ENCODE measurements at regions of chr14 and their contacts with region 1.

Region 1: GRCh38 chr14:37874429-37875191 is 279.2 kb downstream of the TTC6 start:
- DNase-seq: peak; percentile 90
- ATAC-seq: peak; percentile 97
- H3K4me3 ChIP-seq: peak overlapping the region in 1 of 3 experiments; percentile 49; a peak in 2 of 6 replicates
- H3K27ac ChIP-seq: peak overlapping the region; percentile 4
- H3K4me1 ChIP-seq: peaks cover 42% of the 10 kb centered on the region
- H3K27me3 ChIP-seq: no peaks in the 10 kb centered on the region
- CTCF ChIP-seq: peak; percentile 100
- EP300 ChIP-seq: no peak; a peak in 1 of 4 replicates
- POLR2A ChIP-seq: no peak
- RAD21 ChIP-seq: peak; percentile 100

Region 2: DNA sequence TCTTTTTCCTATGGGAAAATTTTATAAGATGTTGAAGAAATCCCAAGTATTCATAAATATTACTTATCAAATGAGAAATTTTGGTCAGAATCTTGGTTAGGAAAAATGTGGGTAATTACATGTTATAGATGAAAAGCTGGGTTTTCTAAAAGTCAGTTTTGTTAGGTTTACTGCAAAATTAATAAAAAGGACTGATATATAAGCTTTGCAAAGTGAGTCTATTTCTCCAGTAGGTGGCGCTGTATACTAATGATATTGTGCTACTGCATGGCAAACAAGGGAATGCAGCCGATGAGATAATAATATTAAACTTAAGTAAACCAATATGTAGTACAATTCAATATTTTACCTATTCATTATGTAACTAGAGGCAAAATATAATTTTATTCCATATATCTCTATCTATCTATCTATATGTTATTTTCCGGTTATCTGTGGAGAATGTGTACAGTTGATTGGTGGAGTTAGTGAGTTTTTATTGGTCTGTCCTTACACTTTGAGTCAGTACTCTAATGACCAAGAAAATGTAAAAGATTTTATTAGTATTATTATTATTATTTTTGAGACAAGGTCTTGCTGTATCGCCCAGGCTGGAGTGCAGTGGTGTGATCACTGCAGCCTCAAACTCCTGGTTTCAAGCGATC is 643.9 kb before region 1 on chr14:
- CTCF ChIA-PET with region 1: interaction called, 5 read pairs
- POLR2A ChIA-PET with region 1: interaction called, 3 read pairs
- in situ Hi-C with region 1: no loop called
- intact Hi-C with region 1: loop called (anchors 1 kb)
- DNase-seq: peak; percentile 90
- ATAC-seq: peak; percentile 83
- H3K4me3 ChIP-seq: no peak overlapping the region
- H3K27ac ChIP-seq: no peak overlapping the region
- H3K4me1 ChIP-seq: peaks cover 8% of the 10 kb centered on the region
- H3K27me3 ChIP-seq: no peaks in the 10 kb centered on the region
- CTCF ChIP-seq: peak; percentile 83
- EP300 ChIP-seq: no peak
- POLR2A ChIP-seq: no peak
- RAD21 ChIP-seq: peak; percentile 66

Region 3: DNA sequence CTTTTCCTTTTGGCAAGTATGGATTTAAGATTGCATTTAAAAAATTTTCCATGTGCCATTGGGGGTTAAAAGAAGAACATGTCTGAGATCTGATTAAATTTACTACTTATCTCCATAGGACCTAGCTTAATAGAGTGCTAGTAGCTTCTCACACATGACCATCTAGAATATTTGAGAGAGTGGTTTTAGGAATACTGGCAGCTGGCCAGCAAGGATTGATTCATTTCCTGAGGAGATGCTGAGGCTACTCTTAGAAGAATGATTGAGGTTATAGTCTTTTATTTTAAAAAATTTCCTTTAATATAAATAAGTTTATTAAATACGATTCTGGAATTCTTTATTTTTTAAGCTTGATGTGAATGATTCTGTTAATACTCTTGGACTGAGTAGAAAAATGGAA is 620.7 kb before region 1 on chr14:
- CTCF ChIA-PET with region 1: interaction called, 4 read pairs
- POLR2A ChIA-PET with region 1: no interaction called
- in situ Hi-C with region 1: loop called (anchors 5 kb)
- intact Hi-C with region 1: no loop called
- DNase-seq: no peak
- ATAC-seq: no peak
- H3K4me3 ChIP-seq: no peak overlapping the region
- H3K27ac ChIP-seq: no peak overlapping the region
- H3K4me1 ChIP-seq: peaks cover 29% of the 10 kb centered on the region
- H3K27me3 ChIP-seq: no peaks in the 10 kb centered on the region
- CTCF ChIP-seq: no peak
- EP300 ChIP-seq: no peak
- POLR2A ChIP-seq: no peak
- RAD21 ChIP-seq: no peak

Region 4: DNA sequence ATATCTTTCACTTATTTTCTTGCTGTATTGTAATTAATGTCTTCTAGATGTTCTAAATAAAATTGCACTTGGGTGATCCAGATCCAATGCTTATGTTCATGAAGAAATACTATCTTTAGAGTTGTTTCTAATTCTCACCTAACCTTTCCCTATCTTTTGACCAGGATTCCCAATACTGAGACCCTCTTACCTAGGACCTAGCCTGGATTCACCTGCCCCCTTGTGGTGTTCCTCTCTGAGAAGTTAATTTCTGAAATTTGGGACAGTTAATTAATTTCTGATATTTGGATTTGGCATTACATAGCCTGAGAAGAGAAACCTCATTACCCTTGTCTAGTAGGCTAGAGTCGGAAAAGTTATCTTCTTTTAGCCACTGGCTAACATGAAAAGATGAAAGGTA is 309.1 kb before region 1 on chr14:
- CTCF ChIA-PET with region 1: no interaction called
- POLR2A ChIA-PET with region 1: no interaction called
- in situ Hi-C with region 1: no loop called
- intact Hi-C with region 1: loop called (anchors 1 kb)
- DNase-seq: peak; percentile 70
- ATAC-seq: peak; percentile 76
- H3K4me3 ChIP-seq: no peak overlapping the region
- H3K27ac ChIP-seq: no peak overlapping the region
- H3K4me1 ChIP-seq: peaks cover 20% of the 10 kb centered on the region
- H3K27me3 ChIP-seq: no peaks in the 10 kb centered on the region
- CTCF ChIP-seq: peak; percentile 88
- EP300 ChIP-seq: 0 out of 4 replicates have a peak, but pooled peaks of 1 of the 2 experiments have one; percentile 9
- POLR2A ChIP-seq: no peak
- RAD21 ChIP-seq: peak; percentile 92

Region 5: DNA sequence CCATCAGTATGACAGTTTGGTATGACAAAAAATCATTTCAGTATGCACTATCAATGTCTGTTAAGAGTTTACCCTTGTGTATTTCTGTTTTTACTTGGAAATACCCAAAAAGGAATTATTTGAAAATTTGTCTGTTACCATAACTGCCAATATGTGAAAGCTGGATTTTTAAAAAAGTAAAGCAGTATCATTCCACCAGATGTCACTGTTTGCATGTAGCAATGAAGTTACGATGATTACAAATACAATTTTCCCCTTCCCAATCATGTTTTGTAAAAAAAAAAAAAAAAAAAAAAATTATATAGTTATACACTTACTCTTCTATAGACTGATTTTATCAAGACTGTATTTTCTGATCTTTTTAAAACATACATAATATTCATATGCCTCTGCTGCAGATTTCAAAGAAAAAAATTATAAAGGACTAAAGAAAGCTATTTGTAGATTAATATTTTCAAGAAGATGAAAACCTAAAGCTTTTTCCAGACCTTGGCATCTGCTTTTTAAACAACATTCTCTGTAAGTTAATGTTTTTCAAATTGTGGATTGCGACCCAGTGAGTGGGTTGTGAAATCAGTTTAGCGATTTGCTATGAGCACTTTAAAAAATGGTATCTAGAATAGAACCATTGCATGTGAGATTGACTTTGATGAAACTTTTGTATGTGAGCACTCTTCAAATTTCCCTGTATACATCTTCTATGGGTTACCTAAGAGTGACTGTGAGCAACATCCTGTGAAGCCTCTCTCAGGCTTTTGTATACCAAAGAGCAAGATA is 165.0 kb before region 1 on chr14:
- CTCF ChIA-PET with region 1: interaction called, 213 read pairs
- POLR2A ChIA-PET with region 1: interaction called, 36 read pairs
- in situ Hi-C with region 1: loop called (anchors 5 kb)
- intact Hi-C with region 1: loop called (anchors 1 kb)
- DNase-seq: peak; percentile 70
- ATAC-seq: no peak
- H3K4me3 ChIP-seq: no peak overlapping the region
- H3K27ac ChIP-seq: no peak overlapping the region
- H3K4me1 ChIP-seq: peaks cover 39% of the 10 kb centered on the region
- H3K27me3 ChIP-seq: no peaks in the 10 kb centered on the region
- CTCF ChIP-seq: peak; percentile 75
- EP300 ChIP-seq: no peak
- POLR2A ChIP-seq: no peak
- RAD21 ChIP-seq: peak; percentile 80